Sciatic nerve (tissue), 2 donors: ENCODE measurements at regions of chr2 and their contacts with region 1.

Region 1: DNA sequence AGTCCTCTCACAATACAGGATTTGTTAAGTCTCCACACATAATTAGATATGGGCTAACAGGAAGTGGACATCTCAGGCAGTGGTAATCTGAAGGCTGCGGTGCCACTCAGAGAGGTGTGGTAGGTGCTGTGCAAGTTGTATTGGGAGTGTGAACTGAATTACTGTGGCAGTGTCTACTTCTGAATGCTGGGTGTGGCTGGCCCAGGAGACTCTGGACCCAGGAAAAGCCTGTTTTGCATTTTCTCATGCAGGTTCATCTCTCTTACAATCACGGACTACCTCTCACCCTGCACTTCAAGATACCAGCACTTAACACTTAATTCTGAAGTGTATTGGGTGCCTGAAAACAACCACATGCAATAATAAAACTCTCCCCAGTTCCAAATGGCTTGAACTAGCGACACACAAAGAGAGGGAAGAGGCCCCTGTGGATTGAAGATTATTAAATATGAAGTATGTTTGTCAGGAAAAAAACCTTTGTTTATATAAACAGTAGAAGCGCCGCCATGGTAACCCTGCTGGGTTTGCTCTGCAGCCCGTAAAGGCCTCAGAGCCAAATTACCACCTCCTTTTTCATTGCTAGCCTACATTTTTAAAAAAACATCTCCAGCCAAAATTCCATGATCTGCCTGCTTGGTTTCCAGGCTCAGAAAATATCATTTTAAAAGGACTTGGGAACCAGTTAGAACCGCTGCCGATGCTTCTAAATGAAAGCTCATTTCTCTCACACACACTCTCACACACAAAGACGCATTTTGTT is 77.5 kb downstream of the GFPT1 start:
- DNase-seq: no peak
- ATAC-seq: peak; percentile 60

Region 2: DNA sequence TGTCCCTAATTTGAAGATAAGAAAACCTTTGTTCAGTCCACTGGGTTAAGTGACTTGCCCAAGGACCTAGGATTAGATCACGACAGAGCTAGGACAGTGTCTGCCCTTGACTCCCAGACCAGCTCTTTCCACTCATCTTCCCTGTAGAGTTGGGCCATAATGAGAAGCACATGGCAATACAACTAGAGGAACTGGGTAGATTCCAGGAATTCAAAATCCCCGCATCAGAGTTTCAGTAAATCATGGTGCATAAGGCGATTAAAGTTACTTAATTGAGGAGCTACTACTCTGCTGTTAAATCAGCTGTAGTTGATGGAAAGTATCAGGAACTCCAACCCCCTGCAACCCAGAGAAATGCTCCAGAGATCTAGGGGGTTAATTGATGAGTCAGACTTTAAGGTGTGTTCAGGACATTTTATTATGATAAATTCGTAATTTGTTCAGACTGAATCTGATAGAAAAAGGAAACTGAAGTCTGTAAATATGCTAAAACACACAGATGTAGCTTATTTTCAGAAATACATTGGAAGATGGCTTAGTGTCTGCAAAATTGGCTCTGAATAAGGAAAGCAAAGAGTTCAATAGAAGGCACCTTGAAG is 290.8 kb before region 1 on chr2:
- intact Hi-C with region 1: loop called (anchors 2 kb)
- DNase-seq: no peak
- ATAC-seq: no peak

Region 3: GRCh38 chr2:69242651-69243051 is 66.9 kb before region 1 on chr2:
- intact Hi-C with region 1: loop called (anchors 5 kb)
- DNase-seq: no peak
- ATAC-seq: no peak

Region 4: GRCh38 chr2:69694894-69695849 is 385.6 kb after region 1 on chr2:
- intact Hi-C with region 1: no loop called
- DNase-seq: no peak
- ATAC-seq: no peak